ENCODE measurements at regions of chr16 and their contacts with region 1.

Region 1: DNA sequence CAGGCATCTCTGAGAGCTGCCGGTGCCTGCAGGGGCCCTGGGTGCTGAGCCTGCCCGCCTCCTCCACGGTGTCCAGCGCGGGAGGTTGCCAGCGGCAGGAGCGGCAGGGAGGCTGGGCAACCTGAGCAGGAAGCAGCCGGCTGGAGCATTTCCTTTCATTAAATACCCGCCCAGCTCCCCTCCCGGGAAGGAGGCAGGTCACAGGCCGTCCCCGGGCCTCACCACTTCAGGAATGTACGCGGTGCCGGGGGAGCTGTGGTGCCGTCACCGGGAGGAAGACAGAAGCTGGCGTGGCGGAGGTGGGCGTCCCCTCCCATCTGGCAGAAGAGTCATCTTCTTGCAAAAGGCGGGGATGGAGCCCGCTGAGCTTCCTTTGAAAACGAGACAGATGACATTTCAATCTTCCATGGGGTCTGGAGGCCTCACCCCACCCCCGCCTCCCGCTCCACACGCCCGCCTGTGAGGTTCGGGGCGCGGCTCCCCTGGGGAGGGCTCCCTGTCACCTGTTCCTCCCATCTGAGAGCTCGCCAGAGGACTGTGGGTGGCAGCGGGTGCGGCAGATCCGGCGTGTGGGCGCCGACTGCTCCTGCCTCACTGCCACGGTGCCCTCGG is 16.0 kb downstream of the SOX8 start:
- DNase-seq: no peak
- ATAC-seq: peak; percentile 18

Region 2: GRCh38 chr16:981695-982144 is 15.8 kb before region 1 on chr16 and contains the start of gene SOX8:
- intact Hi-C with region 1: loop called (anchors 2 kb)
- DNase-seq: no peak
- ATAC-seq: no peak
- total RNA-seq, gene SOX8: 0.89 TPM

Region 3: GRCh38 chr16:1119766-1120576 is 122.4 kb after region 1 on chr16:
- intact Hi-C with region 1: no loop called
- DNase-seq: no peak
- ATAC-seq: no peak

Measured in Right ventricle myocardium inferior (tissue), 1 donor.